CD8-positive, alpha-beta T cell (primary cell): ENCODE measurements at regions of chr17 and their contacts with region 1.

Region 1: GRCh38 chr17:64968652-64969501 is 49.6 kb upstream of the LRRC37A3 start:
- DNase-seq: peak in 2 of 9 experiments; percentile 53 to 72
- ATAC-seq: peak; percentile 15
- H3K4me3 ChIP-seq: no peak overlapping the region
- H3K4me3 Mint-ChIP-seq: peak overlapping the region; percentile 42
- H3K27ac ChIP-seq: peak overlapping the region; percentile 53 to 92
- H3K27ac Mint-ChIP-seq: peak overlapping the region; percentile 92
- H3K4me1 ChIP-seq: peaks cover 51% of the 10 kb centered on the region
- H3K4me1 Mint-ChIP-seq: peaks cover 65% of the 10 kb centered on the region
- H3K27me3 ChIP-seq: no peaks in the 10 kb centered on the region
- H3K27me3 Mint-ChIP-seq: no peaks in the 10 kb centered on the region
- CTCF ChIP-seq: no peak

Region 2: GRCh38 chr17:64920026-64920418 is 48.9 kb before region 1 on chr17:
- CTCF ChIA-PET with region 1: no interaction called
- POLR2A ChIA-PET with region 1: interaction called, 3 read pairs
- intact Hi-C with region 1: loop called in 1 of 2 experiments (anchors 2 kb)
- DNase-seq: peak in 3 of 9 experiments; percentile 23 to 47 (median 25)
- ATAC-seq: no peak
- H3K4me3 ChIP-seq: peak overlapping the region; percentile 59 to 73
- H3K4me3 Mint-ChIP-seq: peak overlapping the region; percentile 88
- H3K27ac ChIP-seq: peak overlapping the region; percentile 63 to 72
- H3K27ac Mint-ChIP-seq: peak overlapping the region; percentile 92
- H3K4me1 ChIP-seq: peaks cover 4% of the 10 kb centered on the region
- H3K4me1 Mint-ChIP-seq: peaks cover 3% of the 10 kb centered on the region
- H3K27me3 ChIP-seq: no peaks in the 10 kb centered on the region
- H3K27me3 Mint-ChIP-seq: no peaks in the 10 kb centered on the region
- CTCF ChIP-seq: no peak

Region 3: DNA sequence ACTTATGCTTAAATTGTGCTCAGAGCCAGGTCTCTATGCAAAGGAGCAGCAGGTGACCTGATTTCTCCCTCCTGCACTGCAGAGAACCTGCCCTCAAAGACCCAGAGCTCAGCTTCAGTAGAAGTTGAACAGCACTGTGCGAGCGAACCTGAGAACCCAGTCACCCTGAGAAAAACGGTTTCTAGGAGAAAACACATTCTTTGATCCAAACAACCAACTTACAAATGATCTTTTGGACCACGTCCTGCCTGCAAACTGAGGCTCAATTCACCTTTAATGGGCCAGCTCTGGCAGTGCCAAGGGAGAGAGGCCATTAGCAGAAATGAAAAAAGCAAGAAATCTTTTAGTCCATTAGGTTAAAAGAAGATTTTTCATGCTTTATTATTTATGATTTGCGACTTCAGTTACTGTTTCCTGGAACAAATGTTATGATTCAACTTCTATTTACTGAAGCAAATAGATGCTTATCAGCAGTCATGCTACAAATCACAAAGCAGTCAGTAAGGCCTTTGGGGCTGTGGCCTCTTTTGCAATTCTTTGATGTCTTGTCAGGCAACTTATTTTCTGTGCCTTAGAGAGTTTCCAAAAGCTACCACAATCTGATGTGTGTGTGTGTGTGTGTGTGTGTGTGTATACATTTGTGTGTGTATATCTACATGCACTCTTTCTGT is 16.1 kb after region 1 on chr17:
- CTCF ChIA-PET with region 1: interaction called, 4 read pairs
- POLR2A ChIA-PET with region 1: interaction called, 8 read pairs
- intact Hi-C with region 1: loop called in 1 of 2 experiments (anchors 2 kb)
- DNase-seq: peak in 8 of 9 experiments; percentile 30 to 87 (median 60)
- ATAC-seq: peak; percentile 48
- H3K4me3 ChIP-seq: peak overlapping the region; percentile 42 to 43
- H3K4me3 Mint-ChIP-seq: peak overlapping the region; percentile 76
- H3K27ac ChIP-seq: peak overlapping the region; percentile 82 to 99
- H3K27ac Mint-ChIP-seq: peak overlapping the region; percentile 99
- H3K4me1 ChIP-seq: peaks cover 34% of the 10 kb centered on the region
- H3K4me1 Mint-ChIP-seq: peaks cover 35% of the 10 kb centered on the region
- H3K27me3 ChIP-seq: no peaks in the 10 kb centered on the region
- H3K27me3 Mint-ChIP-seq: no peaks in the 10 kb centered on the region
- CTCF ChIP-seq: no peak

Region 4: GRCh38 chr17:65122836-65123756 is 154.2 kb after region 1 on chr17:
- CTCF ChIA-PET with region 1: no interaction called
- POLR2A ChIA-PET with region 1: no interaction called
- intact Hi-C with region 1: loop called in 1 of 2 experiments (anchors 5 kb)
- DNase-seq: peak; percentile 70 to 94 (median 81)
- ATAC-seq: peak; percentile 96
- H3K4me3 ChIP-seq: peak overlapping the region; percentile 40 to 70
- H3K4me3 Mint-ChIP-seq: peak overlapping the region; percentile 87
- H3K27ac ChIP-seq: peak overlapping the region; percentile 46 to 82
- H3K27ac Mint-ChIP-seq: peak overlapping the region; percentile 98
- H3K4me1 ChIP-seq: peaks cover 6% of the 10 kb centered on the region
- H3K4me1 Mint-ChIP-seq: peaks cover 14% of the 10 kb centered on the region
- H3K27me3 ChIP-seq: no peaks in the 10 kb centered on the region
- H3K27me3 Mint-ChIP-seq: peaks cover 5% of the 10 kb centered on the region
- CTCF ChIP-seq: no peak

Region 5: GRCh38 chr17:65198653-65199382 is 229.9 kb after region 1 on chr17:
- CTCF ChIA-PET with region 1: no interaction called
- POLR2A ChIA-PET with region 1: no interaction called
- intact Hi-C with region 1: loop called in 1 of 2 experiments (anchors 10 kb)
- DNase-seq: peak in 5 of 9 experiments; percentile 6 to 76 (median 52)
- ATAC-seq: peak; percentile 56
- H3K4me3 ChIP-seq: no peak overlapping the region
- H3K4me3 Mint-ChIP-seq: no peak overlapping the region
- H3K27ac ChIP-seq: no peak overlapping the region
- H3K27ac Mint-ChIP-seq: no peak overlapping the region
- H3K4me1 ChIP-seq: peaks cover 3% of the 10 kb centered on the region
- H3K4me1 Mint-ChIP-seq: peaks cover 5% of the 10 kb centered on the region
- H3K27me3 ChIP-seq: no peaks in the 10 kb centered on the region
- H3K27me3 Mint-ChIP-seq: no peaks in the 10 kb centered on the region
- CTCF ChIP-seq: peak; percentile 92